ENCODE measurements at regions of chr4 and their contacts with region 1.

Region 1: GRCh38 chr4:86432552-86433134 is 72.8 kb upstream of the MAPK10 start:
- DNase-seq: no peak
- H3K4me3 ChIP-seq: no peak overlapping the region
- H3K27ac ChIP-seq: no peak overlapping the region
- H3K4me1 ChIP-seq: no peaks in the 10 kb centered on the region
- H3K27me3 ChIP-seq: peaks cover 2% of the 10 kb centered on the region
- CTCF ChIP-seq: no peak

Region 2: DNA sequence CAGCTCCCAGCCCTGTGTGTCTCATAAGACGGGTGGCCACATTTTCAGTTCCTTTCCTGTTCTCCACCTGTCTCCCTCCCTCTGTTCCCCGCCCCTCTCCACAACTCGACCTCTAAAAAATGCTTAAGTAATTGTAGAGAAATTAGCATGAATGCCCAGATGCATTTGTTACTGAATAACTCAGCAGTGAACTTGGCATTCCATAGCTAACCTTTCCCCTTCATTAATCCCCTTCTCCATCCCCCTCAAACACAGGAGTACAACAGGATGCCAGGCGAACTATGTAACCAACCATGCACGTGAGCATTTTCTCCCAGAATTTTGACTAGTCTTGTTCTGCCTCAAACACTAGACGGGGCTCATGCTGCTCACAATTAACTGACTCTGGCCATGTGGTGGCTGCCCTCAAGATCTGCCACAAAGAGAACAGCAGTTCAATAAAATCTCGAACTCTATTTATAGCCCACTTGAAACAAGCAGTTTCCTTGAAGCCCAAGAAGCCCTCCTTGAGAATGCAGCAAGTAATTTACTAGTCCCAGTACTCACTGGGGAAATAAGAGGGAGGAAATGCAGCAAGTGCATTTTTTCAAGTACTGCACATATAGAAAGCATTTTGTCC is 606.5 kb before region 1 on chr4:
- CTCF ChIA-PET with region 1: interaction called, 14 read pairs
- dilution Hi-C with region 1: no loop called
- in situ Hi-C with region 1: no loop called
- intact Hi-C with region 1: no loop called
- DNase-seq: no peak
- H3K4me3 ChIP-seq: no peak overlapping the region
- H3K27ac ChIP-seq: no peak overlapping the region
- H3K4me1 ChIP-seq: peaks cover 12% of the 10 kb centered on the region
- H3K27me3 ChIP-seq: peaks cover 2% of the 10 kb centered on the region
- CTCF ChIP-seq: no peak

Region 3: GRCh38 chr4:86330961-86331742 is 101.5 kb before region 1 on chr4:
- CTCF ChIA-PET with region 1: no interaction called
- dilution Hi-C with region 1: no loop called
- in situ Hi-C with region 1: no loop called
- intact Hi-C with region 1: no loop called
- DNase-seq: no peak
- H3K4me3 ChIP-seq: no peak overlapping the region
- H3K27ac ChIP-seq: no peak overlapping the region
- H3K4me1 ChIP-seq: no peaks in the 10 kb centered on the region
- H3K27me3 ChIP-seq: no peaks in the 10 kb centered on the region
- CTCF ChIP-seq: no peak

Measured in mammary epithelial cell (primary cell).